ENCODE measurements at regions of chr4 and their contacts with region 1.

Region 1: DNA sequence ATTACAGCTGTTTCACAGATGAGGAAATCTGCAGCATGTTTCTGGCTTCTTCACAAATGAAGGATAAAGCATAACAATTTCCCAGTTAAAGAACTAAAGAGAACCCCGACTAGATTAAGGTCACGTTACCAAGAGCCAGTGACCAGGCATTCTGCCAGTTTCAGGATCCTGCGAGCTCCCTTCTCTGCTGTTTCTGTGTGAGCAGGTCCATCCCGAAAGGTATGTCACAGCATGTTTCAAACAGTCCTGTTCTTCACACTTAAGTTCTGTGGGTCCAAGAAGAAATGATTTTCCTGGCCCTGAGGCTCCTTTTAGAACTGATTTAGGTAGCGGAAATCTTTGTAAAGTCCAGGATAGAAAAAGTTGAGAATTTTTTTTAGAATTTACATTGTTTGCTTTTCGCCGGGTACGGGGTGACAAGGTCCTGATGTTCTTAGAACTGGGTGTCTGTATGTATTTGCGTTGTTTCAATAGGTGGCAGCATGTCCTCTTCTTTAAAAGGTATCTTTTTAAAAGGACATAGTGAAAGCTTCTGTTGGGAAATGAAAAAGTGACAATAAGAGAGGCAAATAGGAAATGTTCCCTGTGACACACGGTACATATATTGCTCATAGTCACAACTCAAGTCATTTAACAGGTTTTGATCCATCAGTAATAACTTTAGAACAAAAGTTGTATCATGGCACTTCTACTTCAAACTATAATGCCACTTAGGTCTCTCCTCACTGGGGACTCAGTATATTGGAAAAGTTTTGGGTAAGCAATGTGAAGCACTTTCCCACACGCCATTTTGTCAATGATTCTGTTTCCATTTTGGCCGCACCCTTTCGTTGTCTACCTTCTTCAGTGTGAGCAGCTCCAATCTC is 18.4 kb downstream of the IL21 start:
- DNase-seq: peak in 1 of 3 donors; percentile 26
- ATAC-seq: peak; percentile 43
- H3K4me3 ChIP-seq: no peak overlapping the region
- H3K4me1 ChIP-seq: no peaks in the 10 kb centered on the region
- CTCF ChIP-seq: no peak

Region 2: GRCh38 chr4:122716825-122717448 is 114.4 kb after region 1 on chr4:
- intact Hi-C with region 1: loop called in 1 of 2 experiments (anchors 10 kb)
- DNase-seq: peak in 2 of 3 donors; percentile 67 to 93
- ATAC-seq: peak; percentile 83
- H3K4me3 ChIP-seq: no peak overlapping the region
- H3K4me1 ChIP-seq: no peaks in the 10 kb centered on the region
- CTCF ChIP-seq: peak; percentile 58